PC-3 (cell line): ENCODE measurements at regions of chr9 and their contacts with region 1.

Region 1: DNA sequence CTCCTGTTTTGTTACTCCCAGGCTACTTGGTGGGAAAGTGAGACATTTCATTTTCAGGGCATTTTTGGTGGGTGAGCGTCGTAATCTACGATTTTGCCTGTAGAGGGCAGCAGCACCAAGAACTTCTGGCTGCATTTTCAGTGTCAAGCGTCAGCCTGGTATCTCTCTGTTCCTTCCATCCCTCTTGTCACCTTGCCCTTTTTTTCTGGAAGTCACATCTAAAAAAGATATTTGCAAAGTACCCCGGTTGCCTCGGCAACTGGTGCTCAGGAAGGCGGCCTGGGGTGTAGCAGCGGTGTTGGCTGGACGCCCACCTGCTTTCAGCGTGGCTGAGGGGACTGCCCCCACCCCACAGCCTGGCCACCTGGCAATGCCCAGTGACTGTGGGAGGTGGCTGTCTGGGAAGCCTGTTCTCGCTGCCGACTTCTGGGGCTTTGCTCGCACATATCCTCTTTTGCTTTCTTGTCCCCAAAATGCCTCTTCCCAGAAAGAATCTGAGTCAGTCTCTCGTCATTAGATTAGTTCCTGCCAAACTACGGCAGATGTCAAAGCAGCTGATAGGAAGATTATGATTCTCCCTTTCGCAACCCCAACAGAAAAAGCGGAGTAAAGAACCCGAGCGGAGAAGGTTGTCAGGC is 84.5 kb downstream of the ACER2 start:
- DNase-seq: peak; percentile 69
- ATAC-seq: peak; percentile 76
- H3K4me3 ChIP-seq: peak overlapping the region; percentile 61
- H3K27ac ChIP-seq: no peak overlapping the region
- H3K4me1 ChIP-seq: 0 out of 2 replicates have a peak, but pooled peaks cover 8% of the 10 kb centered on the region
- H3K27me3 ChIP-seq: peaks cover 18% of the 10 kb centered on the region
- CTCF ChIP-seq: peak; percentile 73

Region 2: DNA sequence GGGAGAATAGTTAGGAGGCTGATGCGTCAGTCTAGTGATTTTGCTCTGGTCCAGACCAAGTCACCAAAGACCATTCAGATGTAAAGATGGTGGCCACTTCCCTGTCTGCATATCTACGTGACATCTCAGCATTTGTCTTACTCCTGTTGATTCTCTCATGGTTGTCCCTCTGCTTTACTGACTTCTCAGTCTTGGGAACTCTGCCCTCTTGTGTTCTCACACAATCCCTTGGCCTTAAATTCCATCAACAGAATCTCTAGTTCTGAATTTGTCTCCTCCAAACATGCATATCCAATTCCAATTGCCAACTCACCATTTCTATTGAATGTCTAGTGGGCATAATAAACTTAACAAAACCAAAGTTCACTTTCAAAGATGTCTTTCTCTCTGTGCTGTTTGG is 147.8 kb after region 1 on chr9:
- CTCF ChIA-PET with region 1: no interaction called
- POLR2A ChIA-PET with region 1: no interaction called
- intact Hi-C with region 1: loop called (anchors 5 kb)
- DNase-seq: peak; percentile 3
- ATAC-seq: no peak
- H3K4me3 ChIP-seq: no peak overlapping the region
- H3K27ac ChIP-seq: no peak overlapping the region
- H3K4me1 ChIP-seq: no peaks in the 10 kb centered on the region
- H3K27me3 ChIP-seq: peaks cover 34% of the 10 kb centered on the region; the same call in 1 of the 2 replicates
- CTCF ChIP-seq: peak; percentile 23; the same call in 1 of the 2 replicates

Region 3: GRCh38 chr9:19656704-19657103 is 163.4 kb after region 1 on chr9:
- CTCF ChIA-PET with region 1: no interaction called
- POLR2A ChIA-PET with region 1: no interaction called
- intact Hi-C with region 1: no loop called
- DNase-seq: no peak
- ATAC-seq: no peak
- H3K4me3 ChIP-seq: no peak overlapping the region
- H3K27ac ChIP-seq: no peak overlapping the region
- H3K4me1 ChIP-seq: peaks cover 11% of the 10 kb centered on the region; the same call in 1 of the 2 replicates
- H3K27me3 ChIP-seq: no peaks in the 10 kb centered on the region
- CTCF ChIP-seq: no peak

Region 4: GRCh38 chr9:20340511-20340861 is 847.2 kb after region 1 on chr9:
- CTCF ChIA-PET with region 1: no interaction called
- POLR2A ChIA-PET with region 1: no interaction called
- intact Hi-C with region 1: loop called (anchors 10 kb)
- DNase-seq: no peak
- ATAC-seq: no peak
- H3K4me3 ChIP-seq: no peak overlapping the region
- H3K27ac ChIP-seq: no peak overlapping the region
- H3K4me1 ChIP-seq: no peaks in the 10 kb centered on the region
- H3K27me3 ChIP-seq: no peaks in the 10 kb centered on the region
- CTCF ChIP-seq: no peak